MCF 10A (cell line): ENCODE measurements at regions of chr6 and their contacts with region 1.

Region 1: DNA sequence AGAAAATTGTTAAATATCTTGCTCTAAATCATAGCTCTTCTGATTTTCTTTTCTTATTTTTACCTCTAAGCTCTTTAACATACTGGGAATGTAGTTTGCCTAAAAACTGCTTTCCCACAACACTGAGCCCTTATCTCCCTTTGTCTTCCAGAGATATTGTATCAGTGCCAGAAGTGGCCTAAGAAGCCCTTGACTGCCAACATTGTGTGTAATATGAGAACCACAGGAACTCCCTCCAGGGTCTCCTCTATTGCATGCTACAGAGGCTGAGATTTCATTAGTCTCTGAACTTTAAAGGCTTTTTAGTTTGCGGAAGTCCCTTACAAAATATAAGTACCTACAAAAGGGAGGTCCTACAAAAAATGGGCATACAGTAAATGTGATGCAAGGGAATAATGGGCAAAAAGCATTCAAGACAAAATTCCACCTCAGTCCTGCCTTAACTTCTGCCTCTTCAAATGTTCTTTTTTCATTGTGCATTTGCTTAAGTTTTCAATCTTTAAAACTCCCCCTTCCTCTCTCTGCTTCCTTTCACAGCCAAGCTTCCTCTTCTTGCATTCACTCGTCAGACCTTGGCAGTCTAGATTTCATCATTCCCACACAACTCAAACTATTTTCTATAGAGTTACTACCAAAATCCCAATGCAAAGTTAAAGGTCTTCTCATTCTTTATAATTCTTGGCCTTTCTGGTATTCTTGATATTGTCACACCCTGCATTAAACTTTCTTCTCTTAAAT is 76.5 kb downstream of the ADGRG6 start:
- DNase-seq: peak; percentile 93
- H3K4me3 Mint-ChIP-seq: no peak overlapping the region
- H3K27ac Mint-ChIP-seq: peak overlapping the region; percentile 68
- H3K4me1 Mint-ChIP-seq: peaks cover 39% of the 10 kb centered on the region
- H3K27me3 Mint-ChIP-seq: no peaks in the 10 kb centered on the region
- CTCF ChIP-seq: no peak

Region 2: GRCh38 chr6:141914646-141915045 is 463.7 kb before region 1 on chr6:
- CTCF ChIA-PET with region 1: no interaction called
- POLR2A ChIA-PET with region 1: no interaction called
- intact Hi-C with region 1: no loop called
- DNase-seq: no peak
- H3K4me3 Mint-ChIP-seq: no peak overlapping the region
- H3K27ac Mint-ChIP-seq: no peak overlapping the region
- H3K4me1 Mint-ChIP-seq: no peaks in the 10 kb centered on the region
- H3K27me3 Mint-ChIP-seq: peaks cover 27% of the 10 kb centered on the region
- CTCF ChIP-seq: no peak

Region 3: GRCh38 chr6:142146828-142147662 is 231.3 kb before region 1 on chr6 and contains the starts of genes NMBR and VTA1:
- CTCF ChIA-PET with region 1: interaction called, 4 read pairs
- POLR2A ChIA-PET with region 1: interaction called, 12 read pairs
- intact Hi-C with region 1: no loop called
- DNase-seq: peak; percentile 98
- H3K4me3 Mint-ChIP-seq: peak within 1 kb of the TSS; percentile 97
- H3K27ac Mint-ChIP-seq: peak within 1 kb of the TSS; percentile 92
- H3K4me1 Mint-ChIP-seq: peaks cover 36% of the 10 kb centered on the region
- H3K27me3 Mint-ChIP-seq: no peaks in the 10 kb centered on the region
- CTCF ChIP-seq: peak; percentile 87
- total RNA-seq, gene NMBR: not detected in 2 replicates
- total RNA-seq, gene VTA1: 42.9 and 43.5 TPM in 2 replicates

Region 4: DNA sequence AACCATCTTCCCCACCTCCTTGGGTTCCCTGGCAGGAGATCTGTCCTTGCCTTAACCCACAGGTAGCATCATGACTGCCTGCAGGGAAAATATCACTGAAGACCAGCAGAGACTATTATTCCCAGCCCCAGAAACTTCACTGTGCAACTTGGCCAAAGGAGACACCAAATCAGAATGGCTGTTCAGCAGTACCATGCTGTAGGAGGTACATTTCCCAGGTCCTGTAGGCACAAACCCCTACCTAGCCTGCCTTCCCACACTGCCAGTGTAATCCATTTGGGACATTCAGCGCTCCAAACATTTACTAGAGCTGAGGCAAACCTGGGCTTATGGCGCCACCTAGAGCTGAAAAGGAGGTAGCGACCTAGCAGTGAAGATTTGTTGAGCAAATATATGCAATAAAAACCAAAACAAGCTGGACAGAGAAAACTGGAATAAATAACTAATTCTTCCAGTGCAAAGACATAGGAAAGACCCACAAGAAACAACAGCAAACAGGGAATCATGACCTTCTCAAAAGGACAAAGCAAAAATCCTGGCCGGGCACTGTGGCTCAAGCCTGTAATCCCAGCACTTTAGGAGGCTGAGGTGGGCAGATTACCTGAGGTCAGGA is 170.9 kb before region 1 on chr6:
- CTCF ChIA-PET with region 1: interaction called, 10 read pairs
- POLR2A ChIA-PET with region 1: no interaction called
- intact Hi-C with region 1: no loop called
- DNase-seq: peak; percentile 67
- H3K4me3 Mint-ChIP-seq: no peak overlapping the region
- H3K27ac Mint-ChIP-seq: peak overlapping the region; percentile 31
- H3K4me1 Mint-ChIP-seq: no peaks in the 10 kb centered on the region
- H3K27me3 Mint-ChIP-seq: no peaks in the 10 kb centered on the region
- CTCF ChIP-seq: peak; percentile 72

Region 5: DNA sequence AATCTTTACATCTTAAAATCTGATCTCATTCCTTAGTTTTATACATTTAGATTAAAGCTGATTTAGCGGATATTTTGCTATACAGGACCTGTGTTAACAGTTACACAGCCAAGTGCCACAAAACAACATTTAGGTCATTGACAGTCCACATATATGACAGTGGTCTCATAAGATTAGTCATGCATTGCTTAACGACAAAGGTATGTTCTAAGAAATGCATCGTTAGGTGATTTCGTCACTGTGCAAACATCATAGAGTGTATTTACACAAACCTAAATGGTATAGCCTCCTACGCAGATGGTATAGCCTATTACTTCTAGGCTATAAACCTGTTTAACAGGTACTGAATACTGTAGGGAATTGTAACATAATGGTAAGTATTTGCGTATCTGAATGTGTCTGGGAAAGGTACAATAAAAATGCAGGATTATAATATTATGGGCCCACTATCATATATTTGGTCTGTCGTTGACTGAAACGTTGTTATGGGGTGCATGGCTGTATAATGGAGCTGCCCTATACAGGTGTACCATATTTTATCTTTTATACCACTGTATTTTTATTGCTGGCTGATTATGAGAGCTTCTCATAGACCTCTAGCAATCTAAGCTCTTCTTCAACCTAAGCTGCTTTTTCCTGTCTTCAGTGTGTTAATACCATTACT is 54.8 kb before region 1 on chr6:
- CTCF ChIA-PET with region 1: no interaction called
- POLR2A ChIA-PET with region 1: interaction called, 3 read pairs
- intact Hi-C with region 1: loop called (anchors 1 kb)
- DNase-seq: peak; percentile 80
- H3K4me3 Mint-ChIP-seq: no peak overlapping the region
- H3K27ac Mint-ChIP-seq: peak overlapping the region; percentile 11
- H3K4me1 Mint-ChIP-seq: peaks cover 23% of the 10 kb centered on the region
- H3K27me3 Mint-ChIP-seq: no peaks in the 10 kb centered on the region
- CTCF ChIP-seq: no peak

Region 6: GRCh38 chr6:142361782-142362750 is 16.2 kb before region 1 on chr6:
- CTCF ChIA-PET with region 1: interaction called, 7 read pairs
- POLR2A ChIA-PET with region 1: interaction called, 40 read pairs
- intact Hi-C with region 1: no loop called
- DNase-seq: peak; percentile 69
- H3K4me3 Mint-ChIP-seq: no peak overlapping the region
- H3K27ac Mint-ChIP-seq: no peak overlapping the region
- H3K4me1 Mint-ChIP-seq: peaks cover 26% of the 10 kb centered on the region
- H3K27me3 Mint-ChIP-seq: no peaks in the 10 kb centered on the region
- CTCF ChIP-seq: no peak